ENCODE measurements at regions of chr5 and their contacts with region 1.

Region 1: DNA sequence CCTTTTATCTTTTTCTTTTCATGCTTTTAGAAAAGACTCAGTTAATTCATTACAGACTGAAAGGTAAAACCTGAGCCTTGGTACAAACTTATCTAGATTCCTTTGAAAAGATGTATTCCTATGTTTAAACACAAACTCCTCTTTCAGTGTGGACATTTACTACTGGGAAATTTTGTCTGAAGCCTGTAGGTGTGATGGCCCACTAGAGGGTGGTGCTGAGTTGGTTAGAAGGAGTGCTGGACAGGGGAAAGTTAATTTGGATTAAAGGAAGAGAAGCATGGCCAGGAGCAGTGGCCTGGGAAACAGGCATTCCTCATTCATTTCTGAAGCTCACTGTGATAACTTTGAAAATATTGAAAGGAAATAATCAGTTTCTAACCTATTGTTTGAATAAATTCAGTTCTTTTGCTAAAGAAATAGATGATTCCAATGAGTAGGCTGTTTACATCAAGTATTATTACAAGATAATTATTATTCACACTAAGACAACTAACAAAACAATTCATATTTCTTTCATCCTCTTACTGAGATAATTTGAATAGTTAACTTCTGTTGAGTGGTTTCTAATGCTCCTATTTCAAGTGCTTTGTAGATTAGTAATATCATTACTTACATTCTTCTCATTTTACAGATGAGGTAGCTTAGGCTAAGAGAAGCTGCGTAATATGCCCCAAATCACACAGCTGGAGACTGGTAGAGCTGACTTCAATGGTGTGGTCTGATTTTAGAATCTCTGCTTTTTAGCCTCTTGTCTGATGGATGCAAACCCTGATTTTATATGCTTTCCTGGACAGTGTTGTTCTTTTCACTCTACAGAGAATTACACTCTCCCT is 150.9 kb downstream of the ADGRV1 start:
- DNase-seq: peak in 3 of 5 donors; percentile 8 to 19 (median 15)
- H3K4me3 ChIP-seq: no peak overlapping the region
- H3K27ac ChIP-seq: no peak overlapping the region
- H3K4me1 ChIP-seq: no peaks in the 10 kb centered on the region
- H3K27me3 ChIP-seq: no peaks in the 10 kb centered on the region
- CTCF ChIP-seq: peak in 1 of 3 donors; percentile 17
- EP300 ChIP-seq: no peak
- POLR2A ChIP-seq: no peak

Region 2: GRCh38 chr5:89613222-89613956 is 1096.2 kb before region 1 on chr5:
- intact Hi-C with region 1: loop called in 1 of 4 experiments (anchors 5 kb)
- DNase-seq: no peak
- H3K4me3 ChIP-seq: no peak overlapping the region
- H3K27ac ChIP-seq: no peak overlapping the region
- H3K4me1 ChIP-seq: no peaks in the 10 kb centered on the region
- H3K27me3 ChIP-seq: no peaks in the 10 kb centered on the region
- CTCF ChIP-seq: no peak
- EP300 ChIP-seq: no peak
- POLR2A ChIP-seq: no peak

Measured in ovary (tissue), 10 donors.